Activated B cell treated with CpG ODN at 0.5 μM for 24 hours (primary cell): ENCODE measurements at regions of chr10 and their contacts with region 1.

Region 1: DNA sequence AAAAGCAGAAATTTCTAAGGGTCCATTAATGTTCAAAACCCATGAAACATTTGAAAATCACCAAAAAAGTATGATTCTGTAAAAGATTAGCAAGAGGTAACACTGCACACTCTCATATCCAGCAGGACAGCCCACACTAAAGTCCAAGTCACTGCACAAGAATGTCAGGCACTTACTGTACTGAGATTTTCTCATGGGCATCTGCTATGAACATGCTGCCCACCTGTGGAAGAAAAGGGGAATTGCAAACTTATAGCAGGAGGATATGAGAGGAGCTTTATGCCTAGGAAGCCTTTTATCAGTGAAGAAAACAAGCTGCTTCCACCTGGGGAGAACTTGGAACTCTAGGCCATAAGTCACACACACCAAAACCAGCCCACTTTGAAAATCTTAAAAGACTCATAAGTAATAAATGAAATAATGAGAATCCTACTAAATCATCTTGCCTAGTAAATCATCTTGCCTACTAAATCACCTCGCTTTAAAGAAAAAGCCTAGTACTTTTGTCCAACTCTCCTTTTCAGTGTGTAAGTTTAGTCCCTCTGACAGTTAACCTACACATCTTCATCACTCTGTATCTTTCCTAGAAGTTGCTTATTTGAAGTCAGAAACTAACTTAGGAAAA is 46.1 kb downstream of the ARMH3 start:
- DNase-seq: no peak
- ATAC-seq: peak; percentile 92
- H3K4me3 Mint-ChIP-seq: no peak overlapping the region
- H3K27ac Mint-ChIP-seq: peak overlapping the region; percentile 72
- H3K4me1 Mint-ChIP-seq: peaks cover 58% of the 10 kb centered on the region
- H3K27me3 Mint-ChIP-seq: no peaks in the 10 kb centered on the region
- CTCF ChIP-seq: no peak

Region 2: GRCh38 chr10:101875068-101875688 is 134.7 kb before region 1 on chr10:
- CTCF ChIA-PET with region 1: interaction called, 17 read pairs
- POLR2A ChIA-PET with region 1: interaction called, 4 read pairs
- intact Hi-C with region 1: no loop called
- DNase-seq: no peak
- ATAC-seq: peak; percentile 60
- H3K4me3 Mint-ChIP-seq: no peak overlapping the region
- H3K27ac Mint-ChIP-seq: peak overlapping the region; percentile 10
- H3K4me1 Mint-ChIP-seq: peaks cover 23% of the 10 kb centered on the region
- H3K27me3 Mint-ChIP-seq: no peaks in the 10 kb centered on the region
- CTCF ChIP-seq: no peak

Region 3: GRCh38 chr10:101897633-101898032 is 112.3 kb before region 1 on chr10:
- CTCF ChIA-PET with region 1: interaction called, 338 read pairs
- POLR2A ChIA-PET with region 1: interaction called, 15 read pairs
- intact Hi-C with region 1: loop called (anchors 2 kb)
- DNase-seq: no peak
- ATAC-seq: no peak
- H3K4me3 Mint-ChIP-seq: no peak overlapping the region
- H3K27ac Mint-ChIP-seq: peak overlapping the region; percentile 35
- H3K4me1 Mint-ChIP-seq: peaks cover 80% of the 10 kb centered on the region
- H3K27me3 Mint-ChIP-seq: no peaks in the 10 kb centered on the region
- CTCF ChIP-seq: no peak

Region 4: DNA sequence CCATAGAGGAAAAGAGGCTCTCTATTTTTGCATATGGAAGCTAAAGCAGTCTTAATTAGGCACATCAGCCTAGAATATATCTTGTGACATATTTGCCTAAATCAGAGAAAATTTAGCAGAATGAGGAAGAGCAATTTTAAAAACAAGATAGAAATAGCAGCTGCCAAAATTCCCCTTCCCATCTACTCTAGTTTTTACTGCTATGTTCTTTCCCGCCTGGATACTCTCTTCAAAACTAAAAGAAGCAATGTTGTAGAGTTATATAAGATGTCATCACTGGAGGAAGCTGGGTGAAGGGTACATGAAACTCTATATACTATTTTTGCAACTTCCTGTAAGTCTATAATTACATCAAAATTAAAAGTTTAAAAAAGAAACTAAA is 41.0 kb before region 1 on chr10:
- CTCF ChIA-PET with region 1: interaction called, 46 read pairs
- POLR2A ChIA-PET with region 1: interaction called, 8 read pairs
- intact Hi-C with region 1: loop called (anchors 2 kb)
- DNase-seq: no peak
- ATAC-seq: peak; percentile 63
- H3K4me3 Mint-ChIP-seq: peak overlapping the region; percentile 70
- H3K27ac Mint-ChIP-seq: peak overlapping the region; percentile 95
- H3K4me1 Mint-ChIP-seq: peaks cover 97% of the 10 kb centered on the region
- H3K27me3 Mint-ChIP-seq: no peaks in the 10 kb centered on the region
- CTCF ChIP-seq: no peak

Region 5: GRCh38 chr10:102064868-102065560 is 55.1 kb after region 1 on chr10 and contains the start of gene HPS6:
- CTCF ChIA-PET with region 1: interaction called, 12 read pairs
- POLR2A ChIA-PET with region 1: no interaction called
- intact Hi-C with region 1: no loop called
- DNase-seq: peak; percentile 88
- ATAC-seq: peak; percentile 97
- H3K4me3 Mint-ChIP-seq: peak within 1 kb of the TSS; percentile 89
- H3K27ac Mint-ChIP-seq: peak within 1 kb of the TSS; percentile 90
- H3K4me1 Mint-ChIP-seq: peaks cover 24% of the 10 kb centered on the region
- H3K27me3 Mint-ChIP-seq: no peaks in the 10 kb centered on the region
- CTCF ChIP-seq: no peak
- total RNA-seq, gene HPS6: 22.8 and 23.0 TPM in 2 replicates

Region 6: GRCh38 chr10:102384053-102384452 is 374.1 kb after region 1 on chr10:
- CTCF ChIA-PET with region 1: no interaction called
- POLR2A ChIA-PET with region 1: interaction called, 10 read pairs
- intact Hi-C with region 1: no loop called
- DNase-seq: no peak
- ATAC-seq: peak; percentile 28
- H3K4me3 Mint-ChIP-seq: no peak overlapping the region
- H3K27ac Mint-ChIP-seq: peak overlapping the region; percentile 50
- H3K4me1 Mint-ChIP-seq: peaks cover 18% of the 10 kb centered on the region
- H3K27me3 Mint-ChIP-seq: no peaks in the 10 kb centered on the region
- CTCF ChIP-seq: no peak